Cardiac septum (tissue), 1 donor: ENCODE measurements at regions of chr12 and their contacts with region 1.

Region 1: DNA sequence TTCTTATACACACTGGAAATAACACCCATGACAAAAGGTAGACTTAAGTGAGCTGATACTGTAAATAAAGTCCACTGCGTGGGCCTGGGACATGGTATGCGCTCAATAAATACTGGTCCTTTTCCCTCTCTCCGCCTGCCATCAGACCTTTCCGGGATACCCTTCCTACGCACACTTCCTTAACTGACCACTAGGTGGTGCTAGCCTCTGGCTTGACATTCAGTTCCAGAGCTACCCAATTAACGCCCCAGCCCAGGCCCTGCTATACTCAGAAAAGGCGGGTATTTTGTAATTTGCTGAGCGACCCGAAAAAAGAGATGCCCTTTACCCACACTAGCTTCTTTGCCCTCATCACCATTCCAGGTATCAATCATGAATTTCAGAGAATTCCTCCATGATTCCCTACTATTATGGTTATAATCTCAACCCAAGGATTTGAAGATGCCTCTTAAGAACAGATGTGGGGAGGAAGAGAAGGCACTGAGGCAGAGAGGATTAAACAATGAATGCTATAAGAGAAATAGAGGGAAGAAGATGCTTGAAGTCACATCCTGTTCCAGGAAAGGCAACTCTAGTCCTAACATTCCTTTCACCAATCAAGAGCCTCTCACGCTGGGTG is 3.9 kb upstream of the LRP1 start:
- DNase-seq: no peak

Region 2: GRCh38 chr12:57151741-57152630 is 27.6 kb after region 1 on chr12:
- intact Hi-C with region 1: loop called (anchors 2 kb)
- DNase-seq: no peak

Region 3: GRCh38 chr12:57175428-57176138 is 51.2 kb after region 1 on chr12:
- intact Hi-C with region 1: loop called (anchors 2 kb)
- DNase-seq: no peak

Region 4: DNA sequence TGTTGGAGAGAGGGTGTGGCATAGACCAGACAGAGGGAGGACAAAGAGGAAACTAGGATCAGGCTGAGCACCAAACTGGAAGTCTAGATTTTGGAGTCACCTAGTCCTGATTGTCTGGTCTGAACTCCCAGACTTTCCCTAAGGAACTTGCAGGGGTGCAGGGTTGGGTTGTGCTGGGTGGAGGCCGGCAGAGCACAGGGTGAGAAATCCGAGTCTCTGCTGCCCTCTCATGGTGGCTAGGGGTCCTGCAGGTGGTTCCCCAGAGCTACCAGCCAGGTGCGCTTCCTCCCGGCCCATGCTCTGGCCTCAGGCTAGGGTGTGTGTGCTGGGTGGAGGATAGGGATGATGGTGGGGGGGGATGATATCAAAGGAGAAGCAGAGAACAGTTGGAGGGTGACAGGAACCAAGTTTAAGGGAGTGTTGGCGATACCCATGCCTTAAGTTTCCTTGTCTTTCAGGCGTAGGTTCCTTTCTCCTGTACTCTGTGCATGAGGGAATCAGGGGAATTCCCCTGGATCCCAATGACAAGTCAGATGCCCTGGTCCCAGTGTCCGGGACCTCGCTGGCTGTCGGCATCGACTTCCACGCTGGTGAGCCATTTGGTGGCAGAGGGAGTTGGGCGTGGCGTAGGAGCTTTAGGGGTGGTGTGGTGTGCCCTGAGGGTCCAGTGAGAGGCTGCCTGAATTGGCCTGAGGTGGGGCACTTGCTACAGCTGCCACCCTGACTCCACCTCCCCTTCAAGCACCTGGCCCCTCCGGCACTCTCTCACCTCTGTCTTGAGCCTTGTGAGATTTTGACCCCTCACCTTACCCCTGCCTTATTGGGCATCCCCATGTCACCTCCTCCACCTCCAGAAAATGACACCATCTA is 58.8 kb after region 1 on chr12:
- intact Hi-C with region 1: loop called (anchors 1 kb)
- DNase-seq: no peak